ENCODE measurements at regions of chr6 and their contacts with region 1.

Region 1: DNA sequence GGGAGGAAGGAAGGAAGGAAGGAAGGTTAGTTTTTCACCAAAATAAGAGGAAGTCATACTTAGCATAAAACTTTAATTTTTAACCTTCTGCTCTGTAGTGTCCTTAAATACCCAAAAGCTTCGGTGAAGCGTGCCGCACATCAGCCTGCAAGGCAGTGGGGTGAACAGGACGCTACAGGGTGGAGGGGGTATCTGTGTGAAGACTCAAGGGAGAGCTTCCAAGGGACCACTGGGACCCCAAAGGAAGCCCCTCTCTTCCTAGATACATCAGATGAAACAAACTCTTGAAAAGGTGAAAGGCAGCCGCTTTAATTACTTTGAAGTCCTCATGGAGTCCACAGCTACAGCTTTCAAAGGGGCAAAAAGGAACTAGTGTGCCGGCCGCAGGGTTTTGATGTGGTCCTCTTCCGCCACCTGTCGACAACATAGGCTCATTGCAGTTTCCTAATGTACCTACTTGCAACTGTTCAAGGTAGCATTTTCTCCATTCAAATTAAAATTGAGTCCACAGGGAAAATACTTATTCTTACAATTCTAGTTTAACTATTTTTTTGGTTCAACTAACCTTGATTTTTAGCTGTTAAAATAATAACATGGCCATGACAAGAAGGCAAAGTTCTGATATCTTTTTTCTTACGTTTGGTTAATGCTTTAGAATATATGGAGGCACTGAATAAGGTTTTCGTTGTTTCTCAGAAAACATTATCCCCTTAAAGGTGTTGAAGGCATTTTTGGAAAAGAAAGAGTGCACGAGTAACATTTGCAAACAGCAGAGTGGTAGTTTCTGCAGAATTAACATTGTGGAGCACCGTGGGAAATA is 135.0 kb upstream of the RIPOR2 start:
- DNase-seq: peak; percentile 65
- ATAC-seq: peak; percentile 96
- H3K4me3 ChIP-seq: peak overlapping the region; percentile 70
- H3K27ac ChIP-seq: no peak overlapping the region
- H3K4me1 ChIP-seq: no peaks in the 10 kb centered on the region
- H3K27me3 ChIP-seq: no peaks in the 10 kb centered on the region
- CTCF ChIP-seq: peak; percentile 85 to 90 (median 88)
- EP300 ChIP-seq: no peak
- POLR2A ChIP-seq: no peak
- RAD21 ChIP-seq: peak; percentile 97

Region 2: DNA sequence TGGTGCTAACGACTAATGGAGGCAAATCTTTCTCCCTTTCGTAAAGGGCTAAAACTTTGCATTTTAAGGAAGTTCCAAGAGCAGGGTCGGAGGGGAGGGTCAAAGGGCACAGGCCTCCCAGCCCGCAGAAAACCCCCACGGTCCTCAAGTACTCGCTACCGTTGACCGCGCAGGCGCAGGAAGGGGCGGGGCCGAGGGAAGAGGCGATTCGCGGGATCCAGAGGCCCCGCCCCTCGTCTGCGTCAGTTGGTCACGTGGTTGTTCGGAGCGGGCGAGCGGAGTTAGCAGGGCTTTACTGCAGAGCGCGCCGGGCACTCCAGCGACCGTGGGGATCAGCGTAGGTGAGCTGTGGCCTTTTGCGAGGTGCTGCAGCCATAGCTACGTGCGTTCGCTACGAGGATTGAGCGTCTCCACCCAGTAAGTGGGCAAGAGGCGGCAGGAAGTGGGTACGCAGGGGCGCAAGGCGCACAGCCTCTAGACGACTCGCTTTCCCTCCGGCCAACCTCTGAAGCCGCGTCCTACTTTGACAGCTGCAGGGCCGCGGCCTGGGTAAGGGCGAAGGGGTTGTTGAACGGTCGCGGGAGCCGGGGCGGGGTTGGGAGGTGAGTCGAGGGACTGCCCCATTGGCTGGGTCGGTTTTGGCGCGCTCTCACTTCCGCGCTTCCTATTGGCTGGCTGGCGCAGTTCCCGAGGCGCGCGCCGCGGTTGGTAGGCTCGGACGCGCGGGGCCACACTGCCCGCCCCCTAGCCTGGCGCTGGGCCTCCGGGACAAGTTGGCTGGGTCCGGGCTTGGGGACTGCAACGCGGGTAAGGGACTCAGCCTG is 295.8 kb before region 1 on chr6 and contains the start of gene GMNN:
- CTCF ChIA-PET with region 1: interaction called, 7 read pairs
- POLR2A ChIA-PET with region 1: no interaction called
- RAD21 ChIA-PET with region 1: interaction called, 13 read pairs
- SMC1A ChIA-PET with region 1: interaction called, 7 read pairs
- in situ Hi-C with region 1: no loop called
- intact Hi-C with region 1: loop called (anchors 5 kb)
- DNase-seq: peak; percentile 78
- ATAC-seq: peak; percentile 94
- H3K4me3 ChIP-seq: peak within 1 kb of the TSS; percentile 79
- H3K27ac ChIP-seq: peak within 1 kb of the TSS; percentile 87
- H3K4me1 ChIP-seq: peaks cover 3% of the 10 kb centered on the region; the same call in 1 of the 2 replicates
- H3K27me3 ChIP-seq: no peaks in the 10 kb centered on the region
- CTCF ChIP-seq: no peak
- EP300 ChIP-seq: no peak
- POLR2A ChIP-seq: peak; percentile 96
- RAD21 ChIP-seq: no peak
- polyA plus RNA-seq, gene GMNN: 146 to 153 TPM

Region 3: GRCh38 chr6:24910961-24911712 is 159.6 kb before region 1 on chr6:
- CTCF ChIA-PET with region 1: interaction called, 6 read pairs
- POLR2A ChIA-PET with region 1: interaction called, 4 read pairs
- RAD21 ChIA-PET with region 1: interaction called, 11 read pairs
- SMC1A ChIA-PET with region 1: interaction called, 7 read pairs
- in situ Hi-C with region 1: no loop called
- intact Hi-C with region 1: no loop called
- DNase-seq: no peak
- ATAC-seq: peak; percentile 47
- H3K4me3 ChIP-seq: peak overlapping the region; percentile 86
- H3K27ac ChIP-seq: peak overlapping the region; percentile 60
- H3K4me1 ChIP-seq: peaks cover 26% of the 10 kb centered on the region
- H3K27me3 ChIP-seq: no peaks in the 10 kb centered on the region
- CTCF ChIP-seq: no peak
- EP300 ChIP-seq: no peak
- POLR2A ChIP-seq: no peak; the same call in 1 of the 2 replicates
- RAD21 ChIP-seq: no peak

Region 4: GRCh38 chr6:25006565-25007001 is 64.2 kb before region 1 on chr6:
- CTCF ChIA-PET with region 1: interaction called, 18 read pairs
- POLR2A ChIA-PET with region 1: no interaction called
- RAD21 ChIA-PET with region 1: interaction called, 3 read pairs
- SMC1A ChIA-PET with region 1: interaction called, 9 read pairs
- in situ Hi-C with region 1: no loop called
- intact Hi-C with region 1: no loop called
- DNase-seq: no peak
- ATAC-seq: peak; percentile 72
- H3K4me3 ChIP-seq: 0 out of 2 replicates have a peak overlapping the region, but pooled peaks have one; percentile 28
- H3K27ac ChIP-seq: peak overlapping the region; percentile 46; the same call in 1 of the 2 replicates
- H3K4me1 ChIP-seq: peaks cover 14% of the 10 kb centered on the region
- H3K27me3 ChIP-seq: no peaks in the 10 kb centered on the region
- CTCF ChIP-seq: no peak
- EP300 ChIP-seq: peak in 1 of 2 experiments; percentile 44; a peak in 1 of 4 replicates
- POLR2A ChIP-seq: no peak
- RAD21 ChIP-seq: no peak

Region 5: GRCh38 chr6:25042036-25042521 is 28.7 kb before region 1 on chr6:
- CTCF ChIA-PET with region 1: interaction called, 23 read pairs
- POLR2A ChIA-PET with region 1: interaction called, 3 read pairs
- RAD21 ChIA-PET with region 1: interaction called, 52 read pairs
- SMC1A ChIA-PET with region 1: interaction called, 37 read pairs
- in situ Hi-C with region 1: no loop called
- intact Hi-C with region 1: no loop called
- DNase-seq: no peak
- ATAC-seq: peak; percentile 62
- H3K4me3 ChIP-seq: peak overlapping the region; percentile 67
- H3K27ac ChIP-seq: peak overlapping the region; percentile 60
- H3K4me1 ChIP-seq: peaks cover 23% of the 10 kb centered on the region
- H3K27me3 ChIP-seq: no peaks in the 10 kb centered on the region
- CTCF ChIP-seq: no peak
- EP300 ChIP-seq: no peak
- POLR2A ChIP-seq: peak; percentile 50; the same call in 1 of the 2 replicates
- RAD21 ChIP-seq: no peak

Region 6: GRCh38 chr6:25476831-25477590 is 406.3 kb after region 1 on chr6:
- CTCF ChIA-PET with region 1: no interaction called
- POLR2A ChIA-PET with region 1: no interaction called
- RAD21 ChIA-PET with region 1: no interaction called
- SMC1A ChIA-PET with region 1: no interaction called
- in situ Hi-C with region 1: no loop called
- intact Hi-C with region 1: no loop called
- DNase-seq: no peak
- ATAC-seq: peak; percentile 22; the same call in 2 of the 3 replicates
- H3K4me3 ChIP-seq: no peak overlapping the region
- H3K27ac ChIP-seq: no peak overlapping the region
- H3K4me1 ChIP-seq: peaks cover 6% of the 10 kb centered on the region; the same call in 1 of the 2 replicates
- H3K27me3 ChIP-seq: no peaks in the 10 kb centered on the region
- CTCF ChIP-seq: no peak
- EP300 ChIP-seq: no peak
- POLR2A ChIP-seq: no peak
- RAD21 ChIP-seq: no peak